ENCODE measurements at regions of chr1 and their contacts with region 1.

Region 1: GRCh38 chr1:152001391-152002249 is 8.0 kb upstream of the S100A10 start:
- DNase-seq: peak; percentile 83
- H3K4me3 Mint-ChIP-seq: no peak overlapping the region
- H3K27ac Mint-ChIP-seq: no peak overlapping the region
- H3K4me1 Mint-ChIP-seq: peaks cover 11% of the 10 kb centered on the region
- H3K27me3 Mint-ChIP-seq: peaks cover 3% of the 10 kb centered on the region

Region 2: GRCh38 chr1:151888972-151889570 is 112.5 kb before region 1 on chr1:
- CTCF ChIA-PET with region 1: interaction called, 34 read pairs
- POLR2A ChIA-PET with region 1: no interaction called
- intact Hi-C with region 1: loop called (anchors 1 kb)
- DNase-seq: no peak
- H3K4me3 Mint-ChIP-seq: no peak overlapping the region
- H3K27ac Mint-ChIP-seq: no peak overlapping the region
- H3K4me1 Mint-ChIP-seq: peaks cover 27% of the 10 kb centered on the region
- H3K27me3 Mint-ChIP-seq: no peaks in the 10 kb centered on the region

Region 3: DNA sequence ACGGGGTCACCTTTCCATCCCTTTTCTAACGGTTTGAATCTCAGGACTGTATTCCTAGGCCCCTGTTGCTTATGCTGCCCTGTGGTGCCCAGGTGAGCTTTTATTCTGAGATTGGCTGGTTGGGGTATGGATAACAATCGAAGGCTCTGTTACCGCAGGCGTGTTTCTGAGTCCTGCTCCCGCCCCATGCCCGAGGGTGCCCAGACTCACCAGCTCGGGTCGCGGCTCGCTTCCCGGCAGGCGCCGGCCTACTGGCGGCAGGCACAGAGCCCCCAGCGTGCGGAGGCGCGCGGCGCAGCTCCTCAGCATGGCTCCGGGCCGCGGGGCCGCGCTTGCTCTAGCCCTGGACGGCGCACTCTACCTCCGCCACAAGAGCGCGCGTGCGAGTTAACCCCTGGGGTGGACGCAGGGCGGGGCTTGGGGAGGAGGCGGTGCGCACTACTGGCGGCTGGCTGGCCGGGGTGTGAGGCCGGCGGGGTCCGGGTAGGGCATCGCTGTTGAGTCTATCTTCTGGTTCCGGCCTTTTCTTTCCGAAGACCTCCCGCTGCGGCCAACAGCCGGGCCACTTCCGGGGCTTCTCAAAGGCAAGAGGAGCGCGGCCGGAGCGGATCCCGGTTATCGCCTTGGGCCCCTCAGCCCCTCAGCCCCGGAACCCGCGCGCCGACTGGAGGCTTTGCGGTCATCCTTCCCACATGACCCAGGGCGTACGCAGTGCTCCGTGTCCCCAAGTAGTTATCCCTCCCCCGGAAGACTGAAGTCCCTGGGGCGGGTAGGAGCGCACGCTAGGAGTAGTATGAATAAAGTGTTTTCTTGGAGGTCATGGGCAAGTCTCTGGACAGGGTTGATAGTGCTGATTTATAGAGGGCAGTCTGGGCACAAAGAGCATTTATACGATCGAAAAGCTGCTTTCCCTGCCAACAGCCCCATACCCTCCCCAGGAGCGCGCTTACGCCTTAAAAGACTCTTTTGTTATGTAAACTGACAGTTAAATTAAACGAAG is 92.2 kb before region 1 on chr1 and contains the start of gene THEM4:
- CTCF ChIA-PET with region 1: interaction called, 16 read pairs
- POLR2A ChIA-PET with region 1: no interaction called
- intact Hi-C with region 1: no loop called
- DNase-seq: peak; percentile 98
- H3K4me3 Mint-ChIP-seq: peak within 1 kb of the TSS; percentile 78
- H3K27ac Mint-ChIP-seq: peak within 1 kb of the TSS; percentile 89
- H3K4me1 Mint-ChIP-seq: peaks cover 37% of the 10 kb centered on the region
- H3K27me3 Mint-ChIP-seq: no peaks in the 10 kb centered on the region
- total RNA-seq, gene THEM4: 19.6 to 24.9 TPM

Region 4: GRCh38 chr1:151934048-151934493 is 67.5 kb before region 1 on chr1:
- CTCF ChIA-PET with region 1: interaction called, 377 read pairs
- POLR2A ChIA-PET with region 1: no interaction called
- intact Hi-C with region 1: loop called (anchors 1 kb)
- DNase-seq: peak; percentile 58
- H3K4me3 Mint-ChIP-seq: no peak overlapping the region
- H3K27ac Mint-ChIP-seq: no peak overlapping the region
- H3K4me1 Mint-ChIP-seq: peaks cover 2% of the 10 kb centered on the region
- H3K27me3 Mint-ChIP-seq: no peaks in the 10 kb centered on the region

Region 5: DNA sequence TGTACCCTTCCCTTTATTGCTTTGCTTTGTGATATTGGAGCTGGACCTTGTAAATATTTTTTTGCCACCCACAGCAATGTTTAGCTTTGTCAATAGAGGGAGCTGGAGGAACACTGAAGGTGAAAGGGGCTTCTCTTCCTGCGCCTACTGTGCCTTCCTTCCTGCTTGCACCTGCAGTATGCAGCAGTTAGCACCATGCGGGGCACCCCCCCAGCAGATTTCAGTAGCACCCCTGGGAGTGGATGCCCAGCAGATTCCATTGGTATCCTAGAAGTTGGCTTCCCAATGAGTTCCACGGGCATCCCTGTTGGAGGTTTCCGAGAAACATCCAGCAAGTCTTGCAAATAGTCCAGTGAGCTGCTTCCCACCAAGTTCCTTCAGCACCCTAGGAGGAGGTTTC is 33.6 kb before region 1 on chr1:
- CTCF ChIA-PET with region 1: interaction called, 587 read pairs
- POLR2A ChIA-PET with region 1: interaction called, 3 read pairs
- intact Hi-C with region 1: loop called (anchors 1 kb)
- DNase-seq: peak; percentile 55
- H3K4me3 Mint-ChIP-seq: no peak overlapping the region
- H3K27ac Mint-ChIP-seq: no peak overlapping the region
- H3K4me1 Mint-ChIP-seq: peaks cover 19% of the 10 kb centered on the region
- H3K27me3 Mint-ChIP-seq: no peaks in the 10 kb centered on the region

Region 6: GRCh38 chr1:152013664-152014237 is 12.1 kb after region 1 on chr1:
- CTCF ChIA-PET with region 1: interaction called, 29 read pairs
- POLR2A ChIA-PET with region 1: no interaction called
- intact Hi-C with region 1: no loop called
- DNase-seq: peak; percentile 71
- H3K4me3 Mint-ChIP-seq: no peak overlapping the region
- H3K27ac Mint-ChIP-seq: no peak overlapping the region
- H3K4me1 Mint-ChIP-seq: peaks cover 4% of the 10 kb centered on the region
- H3K27me3 Mint-ChIP-seq: peaks cover 10% of the 10 kb centered on the region

Measured in activated CD4-positive, alpha-beta memory T cell treated with anti-CD3 and anti-CD28 coated beads for 36 hours (primary cell).